Naive thymus-derived CD4-positive, alpha-beta T cell (primary cell): ENCODE measurements at regions of chr17 and their contacts with region 1.

Region 1: DNA sequence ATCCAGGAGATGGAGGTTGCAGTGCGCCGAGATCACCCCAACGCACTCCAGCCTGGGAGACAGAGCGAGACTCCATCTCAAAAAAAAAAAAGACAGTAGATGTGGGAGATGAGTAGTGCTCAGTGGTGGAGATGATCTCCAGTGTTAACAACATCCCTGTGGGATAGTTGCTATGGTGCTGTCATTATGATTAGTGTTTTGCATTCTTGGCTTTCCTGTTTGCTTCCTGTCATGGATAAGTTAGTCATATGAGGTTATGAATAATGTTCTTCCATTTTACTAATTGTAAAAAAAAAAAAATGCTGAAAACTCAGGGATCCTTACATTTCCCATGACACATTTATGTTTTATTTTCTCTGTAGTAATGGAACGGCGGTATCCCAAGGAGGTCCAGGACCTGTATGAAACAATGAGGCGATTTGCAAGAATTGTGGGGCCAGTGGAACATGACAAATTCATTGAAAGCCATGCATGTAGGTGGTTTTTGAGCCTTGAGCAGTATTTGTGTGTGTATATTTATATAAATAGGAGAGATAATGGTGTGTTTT is 24.5 kb upstream of the DUSP14 start:
- DNase-seq: no peak
- ATAC-seq: no peak
- H3K4me3 ChIP-seq: no peak overlapping the region
- H3K4me3 Mint-ChIP-seq: no peak overlapping the region
- H3K27ac ChIP-seq: no peak overlapping the region
- H3K27ac Mint-ChIP-seq: no peak overlapping the region
- H3K4me1 ChIP-seq: no peaks in the 10 kb centered on the region
- H3K4me1 Mint-ChIP-seq: peaks cover 0 to 22% (median 0%) of the 10 kb centered on the region in 7 donors
- H3K27me3 ChIP-seq: no peaks in the 10 kb centered on the region
- H3K27me3 Mint-ChIP-seq: no peaks in the 10 kb centered on the region

Region 2: GRCh38 chr17:37643118-37643766 is 178.1 kb after region 1 on chr17 and contains the start of gene DDX52:
- CTCF ChIA-PET with region 1: no interaction called
- POLR2A ChIA-PET with region 1: interaction called, 11 read pairs
- intact Hi-C with region 1: no loop called
- DNase-seq: peak; percentile 75 to 88 (median 84)
- ATAC-seq: peak; percentile 99
- H3K4me3 ChIP-seq: peak within 1 kb of the TSS; percentile 89
- H3K4me3 Mint-ChIP-seq: peak within 1 kb of the TSS; percentile 89 to 98 (median 94)
- H3K27ac ChIP-seq: peak within 1 kb of the TSS; percentile 85
- H3K27ac Mint-ChIP-seq: peak within 1 kb of the TSS; percentile 63 to 97 (median 93)
- H3K4me1 ChIP-seq: peaks cover 8 to 10% of the 10 kb centered on the region in 2 donors
- H3K4me1 Mint-ChIP-seq: peaks cover 24 to 58% (median 39%) of the 10 kb centered on the region in 7 donors
- H3K27me3 ChIP-seq: peaks cover 0 to 9% of the 10 kb centered on the region in 2 donors
- H3K27me3 Mint-ChIP-seq: peaks cover 20 to 43% (median 30%) of the 10 kb centered on the region in 5 donors
- total RNA-seq, gene DDX52: 20.8 to 34.0 (median 29.3) TPM